ENCODE measurements at regions of chr1 and their contacts with region 1.

Region 1: GRCh38 chr1:223084464-223084866 is 58.6 kb downstream of the TLR5 start:
- DNase-seq: no peak
- ATAC-seq: no peak

Region 2: DNA sequence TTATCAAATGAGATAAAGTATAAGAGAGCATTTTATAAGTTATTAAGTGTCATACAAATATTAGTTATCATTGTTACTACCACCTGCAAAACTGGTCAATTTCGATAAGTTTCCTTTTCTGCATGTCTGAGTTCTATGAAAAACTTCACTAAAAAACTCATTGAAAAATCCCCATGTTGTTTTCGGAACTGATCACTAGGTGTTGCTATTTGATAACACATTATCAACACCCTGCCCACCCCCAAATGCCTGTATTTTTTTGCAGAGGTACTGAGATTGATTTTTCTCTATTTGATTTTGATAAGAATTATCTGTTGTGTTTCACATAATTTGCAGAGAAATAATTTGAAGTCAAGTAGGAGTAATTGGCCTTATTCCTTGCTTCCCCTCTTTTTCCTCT is 291.7 kb before region 1 on chr1:
- intact Hi-C with region 1: loop called (anchors 2 kb)
- DNase-seq: no peak
- ATAC-seq: peak; percentile 76

Region 3: DNA sequence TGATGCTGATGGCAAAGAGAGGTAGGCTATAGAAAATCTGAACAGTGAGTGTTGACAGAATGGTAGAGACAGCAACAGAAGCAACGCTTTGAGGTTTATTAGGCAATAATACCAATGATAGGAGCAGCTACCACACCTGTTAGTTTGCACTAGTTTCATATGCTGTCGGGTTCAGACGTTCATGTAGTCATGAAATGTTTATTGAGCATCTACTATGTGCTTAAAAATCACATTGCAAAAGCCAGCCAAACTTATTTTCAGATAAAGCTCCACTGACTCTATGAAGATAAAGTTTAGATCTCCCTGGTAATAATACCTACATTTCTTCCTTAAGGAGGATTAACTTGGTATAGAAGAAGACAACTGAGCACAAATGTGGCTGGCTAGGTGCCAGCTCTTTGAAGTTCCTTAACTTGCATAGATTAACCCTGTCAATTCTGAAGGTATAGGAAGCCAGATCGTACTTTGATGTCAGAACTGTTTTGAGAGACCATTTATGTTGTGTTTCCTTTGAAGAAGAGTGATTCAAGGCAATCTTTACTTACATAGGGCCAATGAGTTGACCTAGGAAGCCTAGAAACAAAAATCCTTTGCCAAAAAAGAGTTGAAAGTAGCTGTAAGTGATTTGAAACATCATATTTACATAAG is 198.1 kb before region 1 on chr1:
- intact Hi-C with region 1: no loop called
- DNase-seq: no peak
- ATAC-seq: no peak

Region 4: DNA sequence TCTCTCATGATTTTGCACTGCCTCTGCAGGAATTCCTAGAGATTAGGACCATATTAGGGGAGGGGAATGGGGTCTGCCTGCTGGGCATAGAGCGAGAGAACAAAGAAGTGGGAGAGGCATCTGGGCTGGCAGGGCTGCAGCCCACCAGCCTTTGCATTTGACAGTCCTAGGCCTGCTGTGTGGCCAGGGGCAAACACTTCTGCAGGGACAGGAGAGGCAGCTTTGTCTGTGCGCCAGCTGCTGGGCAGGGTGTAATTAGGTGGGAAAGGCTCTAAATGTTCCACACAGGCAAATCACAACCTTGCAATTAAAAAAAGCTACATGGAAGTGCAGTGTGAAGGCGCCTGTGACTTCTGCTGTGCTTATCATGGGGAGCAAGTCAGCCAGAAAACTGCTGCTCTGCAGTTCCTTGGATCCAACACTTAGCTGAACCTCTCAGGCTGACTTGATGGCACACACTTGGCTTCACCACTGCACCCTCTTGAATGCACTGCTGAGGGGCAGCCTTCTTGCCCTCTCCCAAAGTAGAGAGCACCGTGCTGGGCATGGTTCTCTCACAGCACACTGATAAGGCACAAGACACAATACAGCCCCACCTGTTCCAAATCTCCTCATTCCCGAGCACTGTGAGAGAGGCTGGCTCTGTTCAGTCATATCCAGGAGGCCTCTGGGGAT is 132.2 kb after region 1 on chr1:
- intact Hi-C with region 1: no loop called
- DNase-seq: no peak
- ATAC-seq: no peak